ENCODE measurements at regions of chr1 and their contacts with region 1.

Region 1: GRCh38 chr1:3796215-3797061 is at the start of gene LRRC47:
- DNase-seq: peak; percentile 86 to 95 (median 94)
- ATAC-seq: peak; percentile 99
- H3K4me3 ChIP-seq: peak within 1 kb of the TSS; percentile 51 to 75
- H3K4me3 Mint-ChIP-seq: peak within 1 kb of the TSS; percentile 93
- H3K27ac ChIP-seq: peak within 1 kb of the TSS; percentile 49 to 62
- H3K27ac Mint-ChIP-seq: peak within 1 kb of the TSS; percentile 94
- H3K4me1 ChIP-seq: peaks cover 31% of the 10 kb centered on the region
- H3K4me1 Mint-ChIP-seq: peaks cover 44% of the 10 kb centered on the region
- H3K27me3 ChIP-seq: no peaks in the 10 kb centered on the region
- H3K27me3 Mint-ChIP-seq: peaks cover 14% of the 10 kb centered on the region
- CTCF ChIP-seq: no peak
- total RNA-seq, gene LRRC47: 31.8 to 36.3 TPM

Region 2: DNA sequence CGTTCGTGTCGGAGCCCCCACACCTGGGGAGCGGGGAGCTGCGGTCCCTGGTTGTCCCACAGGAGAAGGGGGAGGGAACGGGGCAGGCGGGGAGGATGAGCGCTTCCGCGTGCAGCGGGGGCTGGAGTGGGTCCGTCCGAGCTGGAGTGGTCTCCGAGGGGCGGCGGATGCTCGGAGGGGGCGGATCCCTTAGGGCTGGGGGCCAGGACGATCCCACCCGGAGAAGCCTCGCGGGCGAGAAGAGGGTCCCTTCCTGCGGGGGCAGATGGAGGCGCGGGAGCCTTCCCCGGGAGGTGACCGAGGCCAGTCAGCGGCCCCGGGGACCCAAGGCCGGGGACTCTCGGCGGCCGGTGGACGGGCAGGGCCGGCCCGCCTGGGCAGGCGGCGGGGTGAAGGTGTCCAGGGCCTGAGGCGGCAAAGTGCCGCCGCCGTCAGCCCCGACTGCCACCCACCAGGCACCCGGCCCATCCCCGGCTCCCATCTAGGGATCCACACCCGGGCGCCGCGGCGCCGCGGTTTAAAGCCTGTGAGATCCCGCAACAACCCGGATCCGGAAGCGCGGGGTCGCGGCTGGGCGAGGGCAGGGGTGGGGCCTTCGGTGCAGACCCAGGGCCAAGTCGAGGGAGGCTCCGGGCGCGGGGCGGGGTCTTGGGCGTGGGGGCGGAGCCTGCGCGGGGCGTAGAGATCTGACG is 49.5 kb before region 1 on chr1:
- CTCF ChIA-PET with region 1: no interaction called
- POLR2A ChIA-PET with region 1: no interaction called
- intact Hi-C with region 1: loop called (anchors 1 kb)
- DNase-seq: peak; percentile 66 to 90 (median 86)
- ATAC-seq: peak; percentile 97
- H3K4me3 ChIP-seq: peak overlapping the region; percentile 51 to 63
- H3K4me3 Mint-ChIP-seq: peak overlapping the region; percentile 81
- H3K27ac ChIP-seq: peak overlapping the region; percentile 46 to 47
- H3K27ac Mint-ChIP-seq: peak overlapping the region; percentile 73
- H3K4me1 ChIP-seq: peaks cover 10% of the 10 kb centered on the region
- H3K4me1 Mint-ChIP-seq: peaks cover 27% of the 10 kb centered on the region
- H3K27me3 ChIP-seq: no peaks in the 10 kb centered on the region
- H3K27me3 Mint-ChIP-seq: no peaks in the 10 kb centered on the region
- CTCF ChIP-seq: no peak

Region 3: GRCh38 chr1:3772027-3772714 is 24.3 kb before region 1 on chr1:
- CTCF ChIA-PET with region 1: interaction called, 5 read pairs
- POLR2A ChIA-PET with region 1: interaction called, 6 read pairs
- intact Hi-C with region 1: loop called (anchors 1 kb)
- DNase-seq: peak; percentile 70 to 91 (median 87)
- ATAC-seq: peak; percentile 79
- H3K4me3 ChIP-seq: peak overlapping the region; percentile 39 to 71
- H3K4me3 Mint-ChIP-seq: peak overlapping the region; percentile 80
- H3K27ac ChIP-seq: no peak overlapping the region
- H3K27ac Mint-ChIP-seq: no peak overlapping the region
- H3K4me1 ChIP-seq: peaks cover 10% of the 10 kb centered on the region
- H3K4me1 Mint-ChIP-seq: peaks cover 10% of the 10 kb centered on the region
- H3K27me3 ChIP-seq: no peaks in the 10 kb centered on the region
- H3K27me3 Mint-ChIP-seq: peaks cover 3% of the 10 kb centered on the region
- CTCF ChIP-seq: no peak

Region 4: GRCh38 chr1:3856908-3857790 is 60.7 kb after region 1 on chr1 and contains the starts of genes CEP104 and DFFB:
- CTCF ChIA-PET with region 1: no interaction called
- POLR2A ChIA-PET with region 1: no interaction called
- intact Hi-C with region 1: loop called (anchors 1 to 2 kb)
- DNase-seq: peak; percentile 92 to 99 (median 97)
- ATAC-seq: peak; percentile 97
- H3K4me3 ChIP-seq: peak within 1 kb of the TSS; percentile 92 to 98
- H3K4me3 Mint-ChIP-seq: peak within 1 kb of the TSS; percentile 98
- H3K27ac ChIP-seq: peak within 1 kb of the TSS; percentile 65 to 75
- H3K27ac Mint-ChIP-seq: peak within 1 kb of the TSS; percentile 91
- H3K4me1 ChIP-seq: peaks cover 27% of the 10 kb centered on the region
- H3K4me1 Mint-ChIP-seq: peaks cover 40% of the 10 kb centered on the region
- H3K27me3 ChIP-seq: no peaks in the 10 kb centered on the region
- H3K27me3 Mint-ChIP-seq: no peaks in the 10 kb centered on the region
- CTCF ChIP-seq: no peak
- total RNA-seq, gene CEP104: 15.5 to 16.8 TPM
- total RNA-seq, gene DFFB: 3.4 to 3.7 TPM

Region 5: DNA sequence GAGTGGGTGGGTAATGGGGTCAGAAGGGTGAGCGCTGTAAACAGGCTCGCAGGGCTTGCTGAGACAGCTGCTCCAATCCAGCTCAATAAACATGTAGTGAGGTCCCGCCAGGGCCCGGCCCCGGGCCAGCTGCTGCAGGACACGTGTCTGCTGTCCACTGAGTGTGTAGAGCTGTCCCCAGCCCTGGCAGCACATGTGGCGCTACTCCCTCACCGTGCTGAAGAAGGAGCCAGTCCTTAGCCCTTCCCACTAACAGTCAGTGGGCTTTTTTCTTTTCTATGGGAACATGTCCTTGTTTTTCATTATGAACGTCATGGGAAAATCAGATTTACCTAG is 182.5 kb after region 1 on chr1:
- CTCF ChIA-PET with region 1: no interaction called
- POLR2A ChIA-PET with region 1: no interaction called
- intact Hi-C with region 1: no loop called
- DNase-seq: no peak
- ATAC-seq: no peak
- H3K4me3 ChIP-seq: no peak overlapping the region
- H3K4me3 Mint-ChIP-seq: no peak overlapping the region
- H3K27ac ChIP-seq: no peak overlapping the region
- H3K27ac Mint-ChIP-seq: no peak overlapping the region
- H3K4me1 ChIP-seq: no peaks in the 10 kb centered on the region
- H3K4me1 Mint-ChIP-seq: no peaks in the 10 kb centered on the region
- H3K27me3 ChIP-seq: no peaks in the 10 kb centered on the region
- H3K27me3 Mint-ChIP-seq: peaks cover 9% of the 10 kb centered on the region
- CTCF ChIP-seq: no peak